Activated CD8-positive, alpha-beta T cell treated with anti-CD3 and anti-CD28 coated beads, Interleukin-2, amount 10 ng/mL, durations not matched to agents 7 days and 5 days (primary cell): ENCODE measurements at regions of chr11 and their contacts with region 1.

Region 1: GRCh38 chr11:5476184-5476819 is 12.2 kb upstream of the OR52D1 start:
- DNase-seq: peak; percentile 58
- ATAC-seq: no peak
- H3K4me3 Mint-ChIP-seq: no peak overlapping the region
- H3K27ac Mint-ChIP-seq: no peak overlapping the region
- H3K4me1 Mint-ChIP-seq: no peaks in the 10 kb centered on the region
- H3K27me3 Mint-ChIP-seq: peaks cover 5% of the 10 kb centered on the region

Region 2: GRCh38 chr11:5324197-5324596 is 152.1 kb before region 1 on chr11 and contains the start of gene OR51B2:
- CTCF ChIA-PET with region 1: no interaction called
- POLR2A ChIA-PET with region 1: no interaction called
- DNase-seq: no peak
- ATAC-seq: no peak
- H3K4me3 Mint-ChIP-seq: no peak within 1 kb of the TSS
- H3K27ac Mint-ChIP-seq: no peak within 1 kb of the TSS
- H3K4me1 Mint-ChIP-seq: no peaks in the 10 kb centered on the region
- H3K27me3 Mint-ChIP-seq: peaks cover 2% of the 10 kb centered on the region
- total RNA-seq, gene OR51B2: not detected

Region 3: GRCh38 chr11:5808500-5809121 is 332.3 kb after region 1 on chr11 and contains the start of gene OR52N2:
- CTCF ChIA-PET with region 1: interaction called, 18 read pairs
- POLR2A ChIA-PET with region 1: no interaction called
- DNase-seq: peak; percentile 80
- ATAC-seq: peak; percentile 95
- H3K4me3 Mint-ChIP-seq: peak within 1 kb of the TSS; percentile 88
- H3K27ac Mint-ChIP-seq: peak within 1 kb of the TSS; percentile 43
- H3K4me1 Mint-ChIP-seq: peaks cover 12% of the 10 kb centered on the region
- H3K27me3 Mint-ChIP-seq: peaks cover 18% of the 10 kb centered on the region
- total RNA-seq, gene OR52N2: not detected